Pancreas (tissue), 10 donors: ENCODE measurements at regions of chr13 and their contacts with region 1.

Region 1: DNA sequence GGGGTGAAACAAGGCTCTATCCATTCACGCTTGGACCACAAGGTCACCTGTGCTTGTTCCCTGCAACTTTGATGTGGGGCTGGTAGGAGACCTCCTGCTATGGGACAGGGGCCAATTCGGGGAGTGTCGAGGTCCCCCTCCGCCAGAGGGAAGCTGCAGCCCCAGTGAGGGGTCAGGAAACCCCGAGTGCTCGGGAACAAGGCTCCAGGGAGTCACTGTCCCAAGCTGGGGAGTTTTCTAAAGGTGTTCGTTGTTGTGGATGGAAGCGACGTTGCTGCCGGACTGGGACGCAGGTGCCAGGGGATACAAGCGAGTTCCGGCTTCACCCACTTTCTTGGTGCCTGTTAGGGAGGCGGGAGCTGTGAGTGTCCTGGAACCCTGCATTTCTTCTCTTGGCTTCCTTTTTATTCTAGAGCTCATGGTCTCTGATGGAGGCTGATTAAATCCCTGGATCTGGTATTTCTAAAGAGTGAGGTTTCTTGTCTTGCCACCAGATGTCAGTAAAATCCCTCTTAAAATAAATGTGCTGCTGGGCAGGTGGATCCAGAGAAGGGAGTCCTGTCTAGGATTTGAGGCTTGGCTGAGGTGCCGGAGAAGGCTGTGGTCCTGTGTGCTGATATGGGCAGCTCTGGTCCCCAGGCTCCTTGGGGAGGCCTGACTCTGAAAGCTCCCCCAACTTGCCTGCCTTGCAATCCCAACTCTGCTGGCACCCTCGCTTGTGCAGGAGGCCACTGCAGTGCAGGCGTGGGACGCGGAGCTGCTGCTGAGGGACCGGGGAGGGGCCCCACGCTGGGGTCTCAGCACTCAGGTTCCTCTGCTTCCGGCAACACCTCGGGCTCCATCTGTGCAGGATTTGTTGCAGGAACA is 153.9 kb downstream of the TEX29 start:
- DNase-seq: peak in 1 of 6 donors; percentile 31
- ATAC-seq: peak in 3 of 4 donors; percentile 79 to 87 (median 86)
- H3K4me3 ChIP-seq: no peak overlapping the region
- H3K27ac ChIP-seq: no peak overlapping the region
- H3K4me1 ChIP-seq: no peaks in the 10 kb centered on the region
- H3K27me3 ChIP-seq: no peaks in the 10 kb centered on the region
- CTCF ChIP-seq: peak; percentile 23 to 44 (median 33)

Region 2: DNA sequence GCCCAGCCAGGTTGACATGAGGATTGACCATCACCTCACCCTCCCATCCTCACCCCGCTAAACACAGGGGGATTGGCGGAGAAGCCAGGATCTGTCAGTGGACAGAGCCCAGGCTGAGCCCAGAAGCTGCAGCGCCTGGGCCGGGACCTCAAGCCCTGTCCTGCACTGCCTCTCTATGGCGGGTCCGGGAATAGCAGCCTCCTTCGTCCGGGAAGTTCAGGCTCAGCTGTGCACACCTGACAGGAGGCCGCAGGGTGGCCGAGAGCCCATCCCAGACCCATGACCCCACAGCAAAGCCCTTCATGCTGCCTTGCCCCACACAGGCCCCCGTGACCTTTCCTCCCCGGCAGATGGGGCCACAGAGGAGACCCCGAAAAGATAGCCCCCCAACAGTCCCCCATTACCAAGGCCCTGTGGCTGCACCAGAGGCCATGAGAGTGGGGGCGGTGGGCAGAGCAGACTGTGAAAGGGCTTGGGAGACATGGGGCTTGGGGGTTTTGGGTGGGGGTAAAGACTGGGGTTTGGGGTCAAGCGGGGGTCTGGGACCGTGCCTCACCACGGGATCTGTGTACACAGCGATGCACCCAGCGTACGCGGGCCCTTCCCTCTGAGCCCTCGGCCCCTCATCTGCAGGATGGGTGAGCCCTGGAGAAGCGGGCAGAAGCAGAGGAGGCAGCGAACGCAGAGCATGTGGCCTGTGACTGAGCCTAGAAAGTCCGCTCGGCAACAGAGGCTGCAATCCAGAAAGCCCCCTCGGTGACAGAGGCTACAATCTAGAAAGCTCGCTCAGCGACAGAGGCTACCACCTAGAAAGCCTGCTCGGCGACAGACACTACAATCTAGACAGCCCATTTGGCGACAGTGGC is 969.9 kb after region 1 on chr13:
- intact Hi-C with region 1: loop called in 2 of 3 experiments (anchors 5 kb)
- DNase-seq: peak; percentile 43 to 91 (median 79)
- ATAC-seq: peak; percentile 91 to 98 (median 96)
- H3K4me3 ChIP-seq: no peak overlapping the region
- H3K27ac ChIP-seq: no peak overlapping the region
- H3K4me1 ChIP-seq: no peaks in the 10 kb centered on the region
- H3K27me3 ChIP-seq: peaks cover 0 to 10% (median 0%) of the 10 kb centered on the region in 4 donors
- CTCF ChIP-seq: peak; percentile 48 to 89 (median 81)

Region 3: DNA sequence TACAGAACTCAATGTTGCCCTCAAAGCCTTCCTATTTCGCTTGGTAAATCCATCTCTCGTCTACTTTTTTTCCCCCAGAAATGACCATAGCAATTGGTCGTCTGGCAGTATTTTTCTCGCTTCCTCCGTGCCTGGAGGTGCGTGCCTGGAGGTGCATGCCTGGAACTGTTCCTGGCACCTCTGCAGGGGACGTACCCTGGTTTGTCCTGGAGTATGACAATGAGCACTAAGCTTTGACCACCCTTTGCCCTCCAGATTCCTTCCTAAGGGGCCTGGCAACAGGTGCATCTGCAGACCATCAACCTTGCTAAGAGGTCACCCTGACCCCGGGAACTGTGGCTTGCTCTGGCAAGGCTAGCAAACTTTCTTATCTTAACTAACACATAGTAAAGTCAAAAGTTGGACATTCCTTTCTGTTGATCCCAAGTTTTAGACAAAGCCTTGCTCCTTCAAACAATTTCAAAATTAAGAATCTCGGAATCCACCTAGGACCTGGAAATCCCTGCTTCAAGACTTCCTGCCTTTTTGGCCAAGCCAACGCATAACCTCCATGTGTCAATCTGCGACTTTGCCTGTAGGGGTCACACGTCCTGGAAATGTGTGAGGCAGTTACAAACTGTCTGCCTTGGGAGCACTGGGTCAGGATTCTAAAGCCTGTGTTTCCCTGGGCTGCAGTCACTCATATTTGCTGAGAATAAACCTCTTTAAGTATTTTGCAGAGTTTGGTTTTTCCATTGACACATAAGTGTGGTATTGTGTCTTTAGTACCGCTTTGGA is 1142.4 kb after region 1 on chr13:
- intact Hi-C with region 1: loop called in 1 of 3 experiments (anchors 10 kb)
- DNase-seq: peak in 1 of 6 donors; percentile 44
- ATAC-seq: peak; percentile 75 to 94 (median 85)
- H3K4me3 ChIP-seq: no peak overlapping the region
- H3K27ac ChIP-seq: no peak overlapping the region
- H3K4me1 ChIP-seq: no peaks in the 10 kb centered on the region
- H3K27me3 ChIP-seq: no peaks in the 10 kb centered on the region
- CTCF ChIP-seq: peak; percentile 27 to 54 (median 44)